ENCODE measurements at regions of chr2 and their contacts with region 1.

Region 1: DNA sequence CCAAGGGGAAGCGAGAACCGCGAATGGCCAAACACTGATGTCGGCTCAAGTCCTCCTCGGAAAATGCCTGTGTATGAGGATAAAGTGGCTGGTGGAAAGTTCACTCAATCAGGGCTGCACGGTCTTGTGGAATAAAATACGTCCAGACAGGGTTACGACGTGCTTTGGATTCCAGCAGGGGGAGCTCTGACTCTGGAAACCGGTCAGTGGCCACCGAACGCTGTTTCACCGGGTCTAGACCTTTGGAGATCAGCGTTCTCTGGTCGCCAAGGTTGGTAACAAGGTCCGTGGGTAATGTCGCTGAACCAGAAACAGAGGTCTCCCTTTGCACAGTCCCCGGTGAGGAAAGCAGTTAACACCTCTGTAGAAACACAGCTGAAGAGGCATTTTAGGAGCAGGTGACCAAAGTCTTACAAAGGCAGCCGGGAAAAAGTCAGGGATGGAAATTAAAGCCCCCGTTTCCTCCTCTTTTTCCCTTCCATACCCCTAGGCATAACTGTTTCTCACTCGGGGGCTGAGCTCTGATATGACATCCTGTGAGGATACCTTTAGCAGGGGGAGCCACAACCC is 47.8 kb downstream of the CDCA7 start:
- DNase-seq: peak; percentile 75
- H3K4me3 Mint-ChIP-seq: no peak overlapping the region
- H3K27ac Mint-ChIP-seq: no peak overlapping the region
- H3K4me1 Mint-ChIP-seq: peaks cover 8% of the 10 kb centered on the region
- H3K27me3 Mint-ChIP-seq: peaks cover 67% of the 10 kb centered on the region

Region 2: GRCh38 chr2:173448938-173449471 is 46.5 kb after region 1 on chr2:
- CTCF ChIA-PET with region 1: interaction called, 11 read pairs
- POLR2A ChIA-PET with region 1: interaction called, 3 read pairs
- DNase-seq: peak; percentile 79
- H3K4me3 Mint-ChIP-seq: peak overlapping the region; percentile 50
- H3K27ac Mint-ChIP-seq: peak overlapping the region; percentile 56
- H3K4me1 Mint-ChIP-seq: peaks cover 10% of the 10 kb centered on the region
- H3K27me3 Mint-ChIP-seq: peaks cover 18% of the 10 kb centered on the region